IMR-90 (cell line): ENCODE measurements at regions of chr4 and their contacts with region 1.

Region 1: DNA sequence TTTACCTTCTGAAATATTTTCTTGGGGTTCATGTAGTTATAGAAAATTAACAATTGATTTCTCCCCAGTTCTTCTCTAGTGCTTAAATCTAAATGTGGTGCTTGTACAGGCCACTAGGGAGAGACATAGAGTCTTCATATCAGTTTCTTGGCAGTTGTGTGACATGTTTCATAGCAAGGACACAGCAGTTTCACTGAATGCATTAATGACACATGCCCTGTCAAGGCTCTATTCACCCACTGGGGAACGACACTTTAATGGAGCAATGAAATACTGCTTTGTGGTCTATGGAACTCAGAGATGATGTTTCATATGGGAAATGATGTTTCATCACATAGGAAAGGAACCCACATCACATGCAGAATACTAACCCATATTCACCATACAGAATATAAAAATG is 2.8 kb downstream of the VEGFC start:
- DNase-seq: peak; percentile 81
- ATAC-seq: no peak
- H3K4me3 ChIP-seq: peak overlapping the region; percentile 96; the same call in 1 of the 2 replicates
- H3K27ac ChIP-seq: no peak overlapping the region
- H3K4me1 ChIP-seq: peaks cover 25% of the 10 kb centered on the region
- H3K27me3 ChIP-seq: no peaks in the 10 kb centered on the region
- CTCF ChIP-seq: peak; percentile 62
- POLR2A ChIP-seq: no peak
- RAD21 ChIP-seq: peak; percentile 60

Region 2: GRCh38 chr4:176508780-176509331 is 281.1 kb before region 1 on chr4:
- CTCF ChIA-PET with region 1: no interaction called
- POLR2A ChIA-PET with region 1: no interaction called
- dilution Hi-C with region 1: no loop called
- in situ Hi-C with region 1: no loop called
- intact Hi-C with region 1: no loop called
- DNase-seq: no peak
- ATAC-seq: no peak
- H3K4me3 ChIP-seq: no peak overlapping the region
- H3K27ac ChIP-seq: no peak overlapping the region
- H3K4me1 ChIP-seq: no peaks in the 10 kb centered on the region
- H3K27me3 ChIP-seq: no peaks in the 10 kb centered on the region
- CTCF ChIP-seq: no peak
- POLR2A ChIP-seq: no peak
- RAD21 ChIP-seq: no peak

Region 3: GRCh38 chr4:176726803-176727202 is 63.2 kb before region 1 on chr4:
- CTCF ChIA-PET with region 1: no interaction called
- POLR2A ChIA-PET with region 1: no interaction called
- dilution Hi-C with region 1: no loop called
- in situ Hi-C with region 1: no loop called
- intact Hi-C with region 1: loop called (anchors 5 kb)
- DNase-seq: peak; percentile 97
- ATAC-seq: peak; percentile 81
- H3K4me3 ChIP-seq: no peak overlapping the region
- H3K27ac ChIP-seq: peak overlapping the region; percentile 30; the same call in 1 of the 2 replicates
- H3K4me1 ChIP-seq: peaks cover 9% of the 10 kb centered on the region
- H3K27me3 ChIP-seq: no peaks in the 10 kb centered on the region
- CTCF ChIP-seq: no peak
- POLR2A ChIP-seq: no peak
- RAD21 ChIP-seq: no peak

Region 4: GRCh38 chr4:177016541-177017141 is 226.7 kb after region 1 on chr4:
- CTCF ChIA-PET with region 1: no interaction called
- POLR2A ChIA-PET with region 1: no interaction called
- dilution Hi-C with region 1: no loop called
- in situ Hi-C with region 1: loop called (anchors 10 kb)
- intact Hi-C with region 1: no loop called
- DNase-seq: peak; percentile 52
- ATAC-seq: peak; percentile 82
- H3K4me3 ChIP-seq: no peak overlapping the region
- H3K27ac ChIP-seq: peak overlapping the region; percentile 34
- H3K4me1 ChIP-seq: peaks cover 9% of the 10 kb centered on the region
- H3K27me3 ChIP-seq: no peaks in the 10 kb centered on the region
- CTCF ChIP-seq: no peak
- POLR2A ChIP-seq: no peak
- RAD21 ChIP-seq: no peak

Region 5: DNA sequence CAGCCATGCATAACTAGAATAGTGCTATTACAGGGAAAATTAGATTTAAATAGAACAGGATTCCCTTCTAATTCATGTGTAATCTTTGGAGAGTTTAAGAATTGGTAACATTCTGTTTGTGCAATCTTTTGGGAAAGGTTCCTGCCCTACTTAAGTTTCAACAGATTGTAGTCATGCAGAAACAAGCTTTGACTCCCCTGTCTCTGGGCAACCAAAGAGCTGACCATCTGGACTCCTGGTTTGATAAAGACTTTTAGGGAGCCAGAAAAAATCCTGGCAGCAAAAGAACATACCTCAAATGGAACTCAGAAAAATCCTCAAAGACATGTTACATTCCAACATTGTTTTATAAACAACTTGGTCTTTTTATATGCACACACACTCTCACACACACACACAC is 328.6 kb after region 1 on chr4:
- CTCF ChIA-PET with region 1: no interaction called
- POLR2A ChIA-PET with region 1: no interaction called
- dilution Hi-C with region 1: no loop called
- in situ Hi-C with region 1: no loop called
- intact Hi-C with region 1: loop called (anchors 5 kb)
- DNase-seq: peak; percentile 99
- ATAC-seq: peak; percentile 92
- H3K4me3 ChIP-seq: no peak overlapping the region
- H3K27ac ChIP-seq: peak overlapping the region; percentile 74; the same call in 1 of the 2 replicates
- H3K4me1 ChIP-seq: peaks cover 2% of the 10 kb centered on the region
- H3K27me3 ChIP-seq: no peaks in the 10 kb centered on the region
- CTCF ChIP-seq: no peak
- POLR2A ChIP-seq: no peak
- RAD21 ChIP-seq: no peak

Region 6: DNA sequence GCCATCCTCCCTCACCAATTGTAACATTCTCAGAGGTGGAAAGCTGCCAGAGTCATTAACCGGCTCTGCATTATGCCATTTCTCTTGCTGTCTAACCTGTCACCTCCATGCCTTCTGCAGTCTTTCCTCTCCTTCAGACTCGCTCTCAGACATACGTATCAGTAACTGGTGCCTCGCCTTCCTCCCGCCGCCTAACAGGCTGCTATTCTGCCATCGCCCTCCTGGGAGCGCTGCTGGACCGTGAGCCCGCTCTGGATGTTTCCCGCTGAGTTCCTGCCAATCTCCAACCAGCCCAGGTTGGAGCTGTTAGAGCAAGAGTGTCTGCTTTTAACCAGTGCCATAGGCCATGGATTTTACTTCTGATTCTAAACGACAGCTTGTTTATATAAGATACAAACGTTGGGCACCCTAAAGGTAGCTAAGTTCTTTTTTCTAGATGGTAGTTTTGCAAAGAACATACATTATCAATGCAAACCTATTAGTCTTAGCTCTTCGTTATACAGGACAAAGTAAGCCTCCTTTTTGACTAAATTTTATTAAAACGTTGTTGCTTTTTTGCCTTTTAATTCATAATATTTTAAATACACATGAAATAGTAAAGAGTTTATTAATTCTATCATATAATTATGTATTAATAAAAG is 460.2 kb after region 1 on chr4:
- CTCF ChIA-PET with region 1: no interaction called
- POLR2A ChIA-PET with region 1: no interaction called
- dilution Hi-C with region 1: no loop called
- in situ Hi-C with region 1: no loop called
- intact Hi-C with region 1: loop called (anchors 2 kb)
- DNase-seq: peak; percentile 60
- ATAC-seq: peak; percentile 96
- H3K4me3 ChIP-seq: no peak overlapping the region
- H3K27ac ChIP-seq: no peak overlapping the region
- H3K4me1 ChIP-seq: no peaks in the 10 kb centered on the region; the same call in 1 of the 2 replicates
- H3K27me3 ChIP-seq: no peaks in the 10 kb centered on the region
- CTCF ChIP-seq: peak; percentile 93
- POLR2A ChIP-seq: no peak; the same call in 1 of the 2 replicates
- RAD21 ChIP-seq: peak; percentile 98